Endothelial cell of umbilical vein (primary cell): ENCODE measurements at regions of chr7 and their contacts with region 1.

Region 1: DNA sequence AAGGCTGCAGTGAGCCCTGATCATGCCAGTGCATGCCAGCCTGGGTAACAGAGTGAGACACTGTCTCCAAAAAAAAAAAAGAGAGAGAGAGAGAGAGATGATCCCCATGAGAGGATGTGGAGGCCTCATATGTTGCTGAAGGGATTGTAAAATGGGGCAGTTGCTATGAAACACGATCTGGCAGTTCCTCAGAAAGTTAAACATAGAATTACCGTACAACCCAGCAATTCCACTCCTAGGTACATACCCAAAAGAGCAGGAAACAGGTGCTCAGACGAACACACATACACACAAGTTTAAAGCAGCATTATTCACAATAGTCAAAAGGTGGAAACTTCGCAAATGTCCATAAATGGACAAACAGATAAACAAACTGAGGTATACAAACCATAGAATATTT is 27.4 kb upstream of the CYTH3 start:
- DNase-seq: no peak
- H3K4me3 ChIP-seq: no peak overlapping the region
- H3K27ac ChIP-seq: no peak overlapping the region
- H3K4me1 ChIP-seq: peaks cover 3% of the 10 kb centered on the region
- H3K27me3 ChIP-seq: no peaks in the 10 kb centered on the region
- CTCF ChIP-seq: no peak
- POLR2A ChIP-seq: no peak

Region 2: GRCh38 chr7:6250364-6250833 is 49.4 kb before region 1 on chr7:
- CTCF ChIA-PET with region 1: interaction called, 4 read pairs
- POLR2A ChIA-PET with region 1: no interaction called
- dilution Hi-C with region 1: no loop called
- intact Hi-C with region 1: loop called (anchors 5 kb)
- DNase-seq: no peak
- H3K4me3 ChIP-seq: no peak overlapping the region
- H3K27ac ChIP-seq: no peak overlapping the region
- H3K4me1 ChIP-seq: peaks cover 18% of the 10 kb centered on the region
- H3K27me3 ChIP-seq: no peaks in the 10 kb centered on the region
- CTCF ChIP-seq: no peak
- POLR2A ChIP-seq: no peak